Esophagus squamous epithelium (tissue), 5 donors: ENCODE measurements at regions of chr1 and their contacts with region 1.

Region 1: DNA sequence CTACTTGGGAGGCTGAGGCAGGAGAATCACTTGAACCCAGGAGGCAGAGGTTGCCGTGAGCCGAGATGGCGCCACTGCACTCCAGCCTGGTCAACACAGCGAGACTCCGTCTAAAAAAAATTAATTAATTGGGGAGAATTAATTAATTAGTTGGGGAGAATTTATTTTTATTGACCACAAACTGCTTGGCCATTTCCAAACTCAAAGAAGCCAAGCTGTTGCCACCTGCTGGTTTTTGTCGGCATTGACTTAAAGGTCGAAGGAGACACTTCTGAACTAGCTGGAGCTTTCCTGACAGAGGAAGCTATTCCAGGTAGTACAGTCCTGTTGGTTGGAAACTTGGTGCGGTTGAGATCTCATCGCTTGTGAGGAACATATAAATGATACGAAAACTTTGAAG is 13.1 kb downstream of the MAP1LC3C start:
- DNase-seq: no peak
- H3K4me3 ChIP-seq: no peak overlapping the region
- H3K27ac ChIP-seq: no peak overlapping the region
- H3K4me1 ChIP-seq: no peaks in the 10 kb centered on the region
- H3K27me3 ChIP-seq: no peaks in the 10 kb centered on the region
- CTCF ChIP-seq: peak in 3 of 6 experiments; percentile 18 to 46 (median 21)
- POLR2A ChIP-seq: no peak

Region 2: DNA sequence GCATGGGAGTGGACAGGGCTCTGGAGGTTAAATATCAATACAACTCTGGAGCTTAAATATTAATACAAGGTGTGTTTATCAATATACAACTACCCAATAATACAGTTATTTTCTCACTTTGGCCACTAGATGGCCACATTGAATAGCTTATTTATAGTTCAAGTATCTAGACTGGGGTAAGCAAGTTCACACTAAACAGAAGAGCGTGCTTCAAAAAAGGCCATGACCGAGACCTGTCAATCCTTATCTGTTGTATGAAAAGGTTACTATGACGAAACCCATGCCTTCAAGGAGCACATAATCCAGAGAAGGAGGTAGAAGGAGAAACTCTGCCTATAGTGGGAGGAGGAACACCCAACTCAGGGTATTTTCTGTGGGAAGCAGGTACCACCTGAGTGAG is 374.7 kb before region 1 on chr1:
- intact Hi-C with region 1: loop called (anchors 10 kb)
- DNase-seq: no peak
- H3K4me3 ChIP-seq: no peak overlapping the region
- H3K27ac ChIP-seq: no peak overlapping the region
- H3K4me1 ChIP-seq: peaks cover 0 to 30% (median 0%) of the 10 kb centered on the region in 3 donors
- H3K27me3 ChIP-seq: no peaks in the 10 kb centered on the region
- CTCF ChIP-seq: peak in 5 of 6 experiments; percentile 50 to 76 (median 68)
- POLR2A ChIP-seq: no peak

Region 3: GRCh38 chr1:241902391-241903065 is 83.3 kb before region 1 on chr1:
- intact Hi-C with region 1: loop called (anchors 10 kb)
- DNase-seq: no peak
- H3K4me3 ChIP-seq: no peak overlapping the region
- H3K27ac ChIP-seq: no peak overlapping the region
- H3K4me1 ChIP-seq: no peaks in the 10 kb centered on the region
- H3K27me3 ChIP-seq: no peaks in the 10 kb centered on the region
- CTCF ChIP-seq: no peak
- POLR2A ChIP-seq: no peak